ENCODE measurements at regions of chr12 and their contacts with region 1.

Region 1: GRCh38 chr12:116599285-116600136 is 40.3 kb downstream of the MAP1LC3B2 start:
- DNase-seq: peak; percentile 87 to 95 (median 88)
- H3K4me3 ChIP-seq: peak overlapping the region; percentile 31
- H3K27ac ChIP-seq: peak overlapping the region; percentile 14 to 77
- H3K4me1 ChIP-seq: peaks cover 27% of the 10 kb centered on the region
- H3K27me3 ChIP-seq: no peaks in the 10 kb centered on the region
- CTCF ChIP-seq: peak in 2 of 3 donors; percentile 47 to 55
- EP300 ChIP-seq: peak; percentile 38
- POLR2A ChIP-seq: peak; percentile 43

Region 2: GRCh38 chr12:115998119-115998633 is 601.3 kb before region 1 on chr12:
- intact Hi-C with region 1: loop called in 2 of 4 experiments (anchors 5 to 10 kb)
- DNase-seq: peak in 1 of 5 donors; percentile 39
- H3K4me3 ChIP-seq: no peak overlapping the region
- H3K27ac ChIP-seq: no peak overlapping the region
- H3K4me1 ChIP-seq: peaks cover 5% of the 10 kb centered on the region
- H3K27me3 ChIP-seq: no peaks in the 10 kb centered on the region
- CTCF ChIP-seq: peak; percentile 53 to 81 (median 71)
- EP300 ChIP-seq: no peak
- POLR2A ChIP-seq: no peak

Region 3: GRCh38 chr12:116015525-116015924 is 584.0 kb before region 1 on chr12:
- intact Hi-C with region 1: loop called in 1 of 4 experiments (anchors 5 kb)
- DNase-seq: no peak
- H3K4me3 ChIP-seq: no peak overlapping the region
- H3K27ac ChIP-seq: no peak overlapping the region
- H3K4me1 ChIP-seq: peaks cover 2% of the 10 kb centered on the region
- H3K27me3 ChIP-seq: no peaks in the 10 kb centered on the region
- CTCF ChIP-seq: peak; percentile 12 to 54 (median 34)
- EP300 ChIP-seq: no peak
- POLR2A ChIP-seq: no peak

Region 4: DNA sequence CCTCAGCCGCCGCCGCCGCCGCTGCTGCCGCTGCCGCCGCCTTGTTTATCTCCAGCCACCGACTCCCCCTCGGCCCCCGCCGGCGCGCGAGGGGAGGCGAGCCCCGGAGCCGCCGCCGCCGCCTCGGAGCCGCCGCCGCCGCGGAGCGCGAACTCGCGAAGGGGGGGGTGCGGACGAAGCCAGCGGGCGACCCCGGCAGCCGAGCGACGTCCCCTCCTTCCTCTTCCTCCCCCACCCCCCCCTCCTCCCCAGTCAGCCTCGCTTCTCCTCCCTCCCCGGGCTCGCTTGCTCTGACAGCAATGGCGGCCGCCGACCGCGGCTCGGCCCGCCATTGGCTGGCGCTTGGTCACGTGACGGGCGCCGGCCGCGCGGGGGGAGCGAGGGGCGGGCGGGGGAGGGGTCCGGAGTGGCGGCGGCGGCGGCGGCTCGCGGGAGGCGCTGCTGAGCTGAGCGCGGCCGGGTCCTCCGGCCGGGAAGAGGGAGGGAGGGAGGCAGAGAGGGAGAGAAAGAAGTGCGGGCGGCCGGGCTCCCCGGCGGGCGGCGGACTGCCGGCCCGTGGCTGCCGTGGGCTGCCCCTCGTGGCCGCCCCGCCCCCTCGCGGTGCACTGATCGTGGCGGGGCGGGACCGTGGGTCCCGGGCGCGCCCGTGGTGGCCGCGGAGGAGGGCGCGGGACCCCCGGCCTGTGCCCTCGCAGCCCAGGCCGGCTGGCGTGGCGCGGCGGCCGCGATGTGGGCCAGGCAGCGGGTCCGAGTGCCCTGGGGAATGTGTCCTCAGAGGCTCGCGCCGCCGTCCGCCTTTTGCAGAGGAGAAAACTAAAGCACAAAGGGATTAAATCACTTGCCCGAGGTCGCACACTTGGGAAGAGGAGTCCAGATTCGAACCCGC is 321.9 kb before region 1 on chr12 and contains the start of gene MED13L:
- intact Hi-C with region 1: loop called in 3 of 4 experiments (anchors 2 to 5 kb)
- DNase-seq: peak; percentile 88 to 94 (median 93)
- H3K4me3 ChIP-seq: peak within 1 kb of the TSS; percentile 78
- H3K27ac ChIP-seq: peak within 1 kb of the TSS; percentile 82 to 96
- H3K4me1 ChIP-seq: peaks cover 2% of the 10 kb centered on the region
- H3K27me3 ChIP-seq: no peaks in the 10 kb centered on the region
- CTCF ChIP-seq: peak in 2 of 3 donors; percentile 42 to 54
- EP300 ChIP-seq: no peak
- POLR2A ChIP-seq: peak; percentile 38
- total RNA-seq, gene MED13L: 127 to 198 (median 168) TPM

Region 5: GRCh38 chr12:116303929-116304328 is 295.6 kb before region 1 on chr12:
- intact Hi-C with region 1: loop called in 1 of 4 experiments (anchors 10 kb)
- DNase-seq: peak in 2 of 5 donors; percentile 28 to 55
- H3K4me3 ChIP-seq: no peak overlapping the region
- H3K27ac ChIP-seq: no peak overlapping the region
- H3K4me1 ChIP-seq: peaks cover 12% of the 10 kb centered on the region
- H3K27me3 ChIP-seq: no peaks in the 10 kb centered on the region
- CTCF ChIP-seq: no peak
- EP300 ChIP-seq: no peak
- POLR2A ChIP-seq: no peak

Region 6: DNA sequence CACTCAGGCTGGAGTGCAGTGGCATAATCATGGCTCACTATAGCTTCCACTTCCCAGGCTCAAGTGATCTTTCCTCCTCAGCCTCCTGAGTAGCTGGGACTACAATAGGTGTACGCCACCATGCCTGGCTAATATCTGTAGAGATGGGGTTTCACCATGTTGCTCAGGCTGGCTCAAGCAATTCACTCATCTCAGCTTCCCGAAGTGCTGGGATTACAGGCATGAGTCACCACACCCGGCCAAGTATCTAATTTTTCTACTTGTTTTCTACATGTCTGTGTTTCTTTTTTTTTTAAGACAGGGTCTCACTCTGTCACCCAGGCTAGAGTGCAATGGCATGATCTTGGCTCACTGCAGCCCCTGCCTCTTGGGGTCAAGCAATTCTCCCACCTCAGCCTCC is 202.4 kb before region 1 on chr12:
- intact Hi-C with region 1: no loop called
- DNase-seq: no peak
- H3K4me3 ChIP-seq: no peak overlapping the region
- H3K27ac ChIP-seq: no peak overlapping the region
- H3K4me1 ChIP-seq: no peaks in the 10 kb centered on the region
- H3K27me3 ChIP-seq: no peaks in the 10 kb centered on the region
- CTCF ChIP-seq: no peak
- EP300 ChIP-seq: no peak
- POLR2A ChIP-seq: no peak

Region 7: DNA sequence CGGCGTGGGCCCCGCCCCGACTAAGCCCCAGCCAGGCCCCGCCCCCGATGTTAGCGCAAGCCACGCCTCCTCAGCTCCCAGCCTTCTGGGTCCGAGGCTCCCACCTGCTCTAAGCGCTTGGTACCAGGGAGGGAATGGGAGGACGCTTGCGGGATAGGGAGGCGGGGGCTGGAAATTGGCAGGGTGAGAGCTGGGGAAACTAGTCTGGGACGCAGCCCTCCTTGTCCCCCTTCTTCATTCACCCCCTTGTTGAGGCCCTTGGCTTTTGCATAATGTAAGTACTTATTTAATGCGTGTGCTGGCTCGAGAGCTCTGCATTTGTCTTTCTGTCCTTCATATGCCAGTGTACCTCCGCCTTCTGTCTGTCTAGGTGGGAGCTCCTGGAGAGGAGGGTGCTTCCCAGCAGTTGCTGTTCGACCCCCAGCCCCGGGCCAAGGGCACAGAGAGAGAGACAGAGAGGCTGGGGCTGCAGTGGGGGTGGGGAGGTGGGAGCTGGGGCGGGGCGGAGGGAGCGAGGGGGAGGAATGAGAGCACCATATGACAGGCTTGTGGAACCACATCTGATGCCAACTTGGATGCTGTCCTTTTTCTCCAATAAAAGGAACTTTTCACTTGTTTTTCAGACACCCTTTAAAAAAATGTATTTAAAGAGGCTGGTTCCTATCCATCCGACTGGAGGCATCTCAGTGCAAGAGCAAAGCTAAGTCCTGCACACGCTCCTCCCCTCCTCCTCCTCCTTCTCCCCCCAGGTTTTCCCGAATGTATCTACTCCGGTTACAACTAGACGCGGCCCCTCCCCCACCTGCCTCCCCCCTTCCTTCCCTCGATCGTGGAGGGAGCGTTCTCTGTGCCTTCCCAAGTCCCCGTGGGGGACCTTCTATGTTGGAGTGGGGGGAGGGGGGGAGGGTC is 65.9 kb before region 1 on chr12:
- intact Hi-C with region 1: loop called in 2 of 4 experiments (anchors 5 kb)
- DNase-seq: peak; percentile 87 to 94 (median 90)
- H3K4me3 ChIP-seq: peak overlapping the region; percentile 67
- H3K27ac ChIP-seq: peak overlapping the region; percentile 71 to 79
- H3K4me1 ChIP-seq: peaks cover 6% of the 10 kb centered on the region
- H3K27me3 ChIP-seq: no peaks in the 10 kb centered on the region
- CTCF ChIP-seq: no peak
- EP300 ChIP-seq: no peak
- POLR2A ChIP-seq: peak; percentile 59

Region 8: GRCh38 chr12:116662612-116663144 is 63.2 kb after region 1 on chr12:
- intact Hi-C with region 1: loop called in 1 of 4 experiments (anchors 5 kb)
- DNase-seq: peak; percentile 50 to 74 (median 68)
- H3K4me3 ChIP-seq: no peak overlapping the region
- H3K27ac ChIP-seq: peak overlapping the region in 1 of 2 donors; percentile 59
- H3K4me1 ChIP-seq: peaks cover 9% of the 10 kb centered on the region
- H3K27me3 ChIP-seq: no peaks in the 10 kb centered on the region
- CTCF ChIP-seq: no peak
- EP300 ChIP-seq: no peak
- POLR2A ChIP-seq: no peak